CD14-positive monocyte (primary cell): ENCODE measurements at regions of chr17 and their contacts with region 1.

Region 1: GRCh38 chr17:64326395-64327054 is 63.5 kb upstream of the TEX2 start:
- DNase-seq: peak; percentile 77 to 96 (median 88)
- H3K4me3 ChIP-seq: peak overlapping the region in 1 of 3 experiments; percentile 33
- H3K4me3 Mint-ChIP-seq: peak overlapping the region in 1 of 2 donors; percentile 71
- H3K27ac ChIP-seq: peak overlapping the region; percentile 83 to 86
- H3K27ac Mint-ChIP-seq: peak overlapping the region in 3 of 7 donors; percentile 95 to 96 (median 96)
- H3K4me1 ChIP-seq: peaks cover 70 to 83% of the 10 kb centered on the region in 2 donors
- H3K4me1 Mint-ChIP-seq: peaks cover 21% of the 10 kb centered on the region
- H3K27me3 ChIP-seq: no peaks in the 10 kb centered on the region
- H3K27me3 Mint-ChIP-seq: peaks cover 0 to 3% (median 3%) of the 10 kb centered on the region in 3 donors
- CTCF ChIP-seq: no peak

Region 2: DNA sequence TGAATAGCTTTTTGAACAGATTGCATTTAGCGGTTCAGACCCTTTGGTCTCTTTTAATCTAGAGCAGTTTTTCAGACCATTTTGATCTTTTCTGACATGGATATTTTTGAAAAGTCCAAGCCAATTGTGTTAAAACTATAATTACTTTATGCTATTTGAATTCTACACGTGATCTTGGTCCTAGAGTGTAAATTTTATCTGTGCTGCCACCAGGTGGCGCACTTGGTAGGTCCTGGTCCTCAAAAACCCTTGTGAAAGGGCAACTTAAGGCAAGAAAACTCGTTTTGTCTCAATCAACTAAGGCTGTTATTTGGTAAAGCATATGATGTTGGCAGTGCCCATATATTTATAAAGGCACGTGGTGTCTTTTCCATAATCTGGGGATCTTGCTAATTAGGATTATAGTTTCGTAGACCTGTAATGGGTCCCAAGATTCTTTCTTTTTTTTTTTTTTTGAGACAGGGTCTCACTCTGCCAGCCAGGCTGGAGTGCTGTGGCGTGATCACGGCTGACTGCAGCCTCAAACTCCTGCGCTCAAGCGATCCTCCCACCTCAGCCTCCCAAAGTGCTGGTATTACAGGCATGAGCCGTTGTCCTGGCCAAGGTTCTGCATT is 19.6 kb before region 1 on chr17:
- intact Hi-C with region 1: no loop called
- DNase-seq: peak; percentile 73 to 75 (median 75)
- H3K4me3 ChIP-seq: no peak overlapping the region
- H3K4me3 Mint-ChIP-seq: no peak overlapping the region
- H3K27ac ChIP-seq: no peak overlapping the region
- H3K27ac Mint-ChIP-seq: no peak overlapping the region
- H3K4me1 ChIP-seq: peaks cover 12 to 17% of the 10 kb centered on the region in 2 donors
- H3K4me1 Mint-ChIP-seq: peaks cover 24% of the 10 kb centered on the region
- H3K27me3 ChIP-seq: no peaks in the 10 kb centered on the region
- H3K27me3 Mint-ChIP-seq: no peaks in the 10 kb centered on the region
- CTCF ChIP-seq: peak; percentile 88

Region 3: GRCh38 chr17:64343853-64344637 is 17.5 kb after region 1 on chr17:
- intact Hi-C with region 1: loop called in 1 of 2 experiments (anchors 2 kb)
- DNase-seq: peak; percentile 88 to 97 (median 91)
- H3K4me3 ChIP-seq: peak overlapping the region in 1 of 3 experiments; percentile 44
- H3K4me3 Mint-ChIP-seq: peak overlapping the region; percentile 26 to 59
- H3K27ac ChIP-seq: peak overlapping the region; percentile 94 to 98
- H3K27ac Mint-ChIP-seq: peak overlapping the region; percentile 92 to 98 (median 96)
- H3K4me1 ChIP-seq: peaks cover 59 to 78% of the 10 kb centered on the region in 2 donors
- H3K4me1 Mint-ChIP-seq: peaks cover 67% of the 10 kb centered on the region
- H3K27me3 ChIP-seq: no peaks in the 10 kb centered on the region
- H3K27me3 Mint-ChIP-seq: no peaks in the 10 kb centered on the region
- CTCF ChIP-seq: no peak